Vagina (tissue), 2 donors: ENCODE measurements at regions of chr2 and their contacts with region 1.

Region 1: GRCh38 chr2:197031803-197032202 is 105.3 kb upstream of the PGAP1 start:
- DNase-seq: no peak
- H3K4me3 ChIP-seq: no peak overlapping the region
- H3K27ac ChIP-seq: no peak overlapping the region
- H3K4me1 ChIP-seq: peaks cover 8% of the 10 kb centered on the region
- H3K27me3 ChIP-seq: no peaks in the 10 kb centered on the region
- CTCF ChIP-seq: no peak
- POLR2A ChIP-seq: no peak

Region 2: DNA sequence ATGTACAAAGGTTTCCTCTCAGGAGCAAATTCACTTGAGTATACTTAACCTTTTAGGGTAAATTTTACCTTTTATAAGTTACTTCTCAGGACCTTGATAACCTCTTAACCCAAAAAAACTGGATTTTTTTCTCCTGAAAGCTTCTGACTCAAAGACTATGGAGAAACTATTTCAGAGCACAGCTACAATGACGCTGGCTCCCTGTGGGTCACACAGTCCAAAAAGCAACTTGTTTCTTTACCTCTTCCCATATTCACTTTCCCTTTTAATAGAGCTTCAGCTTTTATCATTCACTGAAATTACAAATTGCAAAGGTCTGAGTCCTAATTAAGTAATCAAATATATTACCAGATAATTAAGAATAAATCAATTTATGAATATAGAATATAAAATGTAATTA is 264.7 kb before region 1 on chr2:
- intact Hi-C with region 1: no loop called
- DNase-seq: no peak
- H3K4me3 ChIP-seq: no peak overlapping the region
- H3K27ac ChIP-seq: no peak overlapping the region
- H3K4me1 ChIP-seq: no peaks in the 10 kb centered on the region
- H3K27me3 ChIP-seq: no peaks in the 10 kb centered on the region
- CTCF ChIP-seq: no peak
- POLR2A ChIP-seq: no peak

Region 3: DNA sequence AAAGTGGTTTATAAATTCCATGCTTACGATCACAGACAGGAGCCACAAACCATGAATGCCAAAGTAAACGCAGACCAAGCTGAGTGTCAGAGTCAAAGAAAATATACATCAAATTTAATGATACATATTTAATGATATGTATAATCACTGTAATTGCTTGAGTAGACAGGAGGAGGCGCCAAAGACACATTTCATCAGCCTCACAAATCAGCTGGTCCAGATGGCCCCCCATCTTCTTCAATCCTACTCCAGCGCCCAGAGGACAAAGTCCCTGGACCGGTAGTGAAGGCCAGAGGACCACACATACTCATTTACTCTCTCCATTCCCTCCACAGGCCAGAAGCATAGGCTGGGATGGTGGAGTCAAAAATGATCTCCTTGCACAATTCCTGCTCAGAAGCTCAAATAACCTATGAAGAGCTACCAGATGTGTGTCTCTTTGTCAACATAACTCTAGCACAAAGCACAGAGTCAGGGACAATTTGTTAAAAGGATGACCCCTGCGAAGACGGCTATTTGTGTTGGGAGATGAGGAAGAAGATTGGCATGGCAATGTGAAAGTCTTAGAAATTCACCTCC is 44.0 kb after region 1 on chr2:
- intact Hi-C with region 1: loop called (anchors 2 kb)
- DNase-seq: no peak
- H3K4me3 ChIP-seq: no peak overlapping the region
- H3K27ac ChIP-seq: no peak overlapping the region
- H3K4me1 ChIP-seq: peaks cover 39% of the 10 kb centered on the region
- H3K27me3 ChIP-seq: no peaks in the 10 kb centered on the region
- CTCF ChIP-seq: no peak
- POLR2A ChIP-seq: no peak

Region 4: DNA sequence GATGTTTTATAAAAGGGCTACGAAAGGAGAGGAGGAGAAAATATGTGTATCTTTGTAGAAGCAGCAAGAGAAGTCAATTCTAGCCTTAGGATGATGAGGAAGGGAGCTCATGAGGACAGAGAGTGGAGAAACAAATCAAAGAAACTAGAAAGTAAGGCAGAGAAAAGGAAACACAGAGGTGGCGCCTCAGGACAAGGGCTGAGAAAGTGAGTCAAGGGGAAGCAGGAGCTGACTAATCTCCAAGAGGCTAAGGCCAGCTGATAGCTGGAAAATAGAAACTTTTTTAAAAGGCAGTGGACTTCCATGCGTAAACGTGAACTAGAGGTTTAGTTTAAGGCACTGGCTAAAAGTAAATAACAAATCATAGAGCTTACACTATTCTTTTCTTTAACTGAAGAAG is 105.4 kb after region 1 on chr2:
- intact Hi-C with region 1: no loop called
- DNase-seq: no peak
- H3K4me3 ChIP-seq: no peak overlapping the region
- H3K27ac ChIP-seq: no peak overlapping the region
- H3K4me1 ChIP-seq: peaks cover 10% of the 10 kb centered on the region
- H3K27me3 ChIP-seq: no peaks in the 10 kb centered on the region
- CTCF ChIP-seq: no peak
- POLR2A ChIP-seq: no peak

Region 5: GRCh38 chr2:197405582-197405981 is 373.8 kb after region 1 on chr2:
- intact Hi-C with region 1: no loop called
- DNase-seq: no peak
- H3K4me3 ChIP-seq: no peak overlapping the region
- H3K27ac ChIP-seq: no peak overlapping the region
- H3K4me1 ChIP-seq: no peaks in the 10 kb centered on the region
- H3K27me3 ChIP-seq: no peaks in the 10 kb centered on the region
- CTCF ChIP-seq: no peak
- POLR2A ChIP-seq: no peak